SK-N-SH (cell line): ENCODE measurements at regions of chr7 and their contacts with region 1.

Region 1: GRCh38 chr7:30564243-30564892 is 30.3 kb upstream of the GARS1 start:
- DNase-seq: peak; percentile 85
- H3K4me3 ChIP-seq: no peak overlapping the region
- H3K27ac ChIP-seq: no peak overlapping the region; a peak in 1 of 4 replicates
- H3K4me1 ChIP-seq: peaks cover 0 to 9% of the 10 kb centered on the region in 2 experiments; a peak in 1 of 4 replicates
- H3K27me3 ChIP-seq: no peaks in the 10 kb centered on the region
- CTCF ChIP-seq: peak; percentile 96
- EP300 ChIP-seq: no peak
- RAD21 ChIP-seq: peak; percentile 99

Region 2: DNA sequence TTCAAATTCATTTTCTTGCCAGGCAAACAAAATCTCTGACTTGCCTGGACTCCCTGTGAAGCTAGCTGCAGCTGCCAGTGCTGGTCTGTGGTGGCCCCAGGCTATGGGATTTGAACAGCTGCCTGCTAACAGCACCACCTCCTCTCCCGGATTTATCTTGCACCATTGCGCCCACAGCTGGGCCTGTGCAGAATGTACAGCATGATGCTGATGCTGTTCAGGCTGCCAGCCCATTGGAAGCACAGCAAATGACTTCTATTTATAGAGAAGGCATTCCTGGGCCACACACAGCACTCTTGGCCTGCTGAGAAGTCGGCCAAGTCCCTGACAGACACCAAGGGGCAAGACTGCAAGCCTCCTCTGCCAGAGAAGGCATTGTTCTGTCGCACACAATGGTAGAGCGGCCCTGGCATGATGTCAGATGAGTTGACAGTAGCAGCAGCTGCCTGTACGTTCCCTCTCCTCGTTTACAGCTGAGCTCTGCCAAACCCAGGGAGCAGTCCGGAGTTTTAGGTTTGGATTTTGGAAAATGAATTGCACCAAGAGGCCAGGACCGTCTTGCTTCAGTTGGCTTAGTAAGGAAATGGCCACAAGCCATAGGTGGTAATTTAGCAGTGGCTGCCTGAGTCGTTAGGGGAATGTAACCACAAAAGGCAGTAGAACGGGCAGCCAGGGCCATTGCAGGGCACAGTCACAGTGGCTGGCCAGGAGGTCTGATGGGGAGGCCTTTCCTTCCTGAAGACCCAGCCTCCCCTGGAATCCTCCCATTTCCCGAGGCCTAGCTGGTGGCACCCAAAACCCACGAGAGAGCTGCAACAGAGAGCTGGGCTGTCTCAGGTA is 391.1 kb before region 1 on chr7:
- CTCF ChIA-PET with region 1: interaction called, 12 read pairs
- POLR2A ChIA-PET with region 1: no interaction called
- DNase-seq: peak; percentile 87
- H3K4me3 ChIP-seq: no peak overlapping the region; a peak in 1 of 4 replicates
- H3K27ac ChIP-seq: peak overlapping the region; percentile 40 to 95
- H3K4me1 ChIP-seq: peaks cover 34 to 38% of the 10 kb centered on the region in 2 experiments; a peak in 3 of 4 replicates
- H3K27me3 ChIP-seq: no peaks in the 10 kb centered on the region
- CTCF ChIP-seq: peak; percentile 40
- EP300 ChIP-seq: peak in 1 of 2 experiments; percentile 79; a peak in 2 of 4 replicates
- RAD21 ChIP-seq: peak; percentile 84

Region 3: GRCh38 chr7:30284298-30285066 is 279.9 kb before region 1 on chr7 and contains the start of gene ZNRF2:
- CTCF ChIA-PET with region 1: interaction called, 263 read pairs
- POLR2A ChIA-PET with region 1: no interaction called
- DNase-seq: peak; percentile 99
- H3K4me3 ChIP-seq: peak within 1 kb of the TSS; percentile 92 to 97
- H3K27ac ChIP-seq: peak within 1 kb of the TSS; percentile 83 to 94
- H3K4me1 ChIP-seq: peaks cover 5 to 7% of the 10 kb centered on the region in 2 experiments; a peak in 3 of 4 replicates
- H3K27me3 ChIP-seq: no peaks in the 10 kb centered on the region
- CTCF ChIP-seq: peak; percentile 48
- EP300 ChIP-seq: peak; percentile 5 to 45; a peak in 2 of 4 replicates
- RAD21 ChIP-seq: no peak
- polyA plus RNA-seq, gene ZNRF2: 3.8 and 4.0 TPM in 2 replicates

Region 4: GRCh38 chr7:30469303-30469702 is 95.1 kb before region 1 on chr7:
- CTCF ChIA-PET with region 1: interaction called, 17 read pairs
- POLR2A ChIA-PET with region 1: no interaction called
- DNase-seq: no peak
- H3K4me3 ChIP-seq: 0 out of 4 replicates have a peak overlapping the region, but pooled peaks of 1 of the 2 experiments have one; percentile 3
- H3K27ac ChIP-seq: peak overlapping the region; percentile 81 to 98
- H3K4me1 ChIP-seq: peaks cover 14 to 83% of the 10 kb centered on the region in 2 experiments
- H3K27me3 ChIP-seq: no peaks in the 10 kb centered on the region
- CTCF ChIP-seq: peak; percentile 61
- EP300 ChIP-seq: no peak; a peak in 1 of 4 replicates
- RAD21 ChIP-seq: peak; percentile 49

Region 5: DNA sequence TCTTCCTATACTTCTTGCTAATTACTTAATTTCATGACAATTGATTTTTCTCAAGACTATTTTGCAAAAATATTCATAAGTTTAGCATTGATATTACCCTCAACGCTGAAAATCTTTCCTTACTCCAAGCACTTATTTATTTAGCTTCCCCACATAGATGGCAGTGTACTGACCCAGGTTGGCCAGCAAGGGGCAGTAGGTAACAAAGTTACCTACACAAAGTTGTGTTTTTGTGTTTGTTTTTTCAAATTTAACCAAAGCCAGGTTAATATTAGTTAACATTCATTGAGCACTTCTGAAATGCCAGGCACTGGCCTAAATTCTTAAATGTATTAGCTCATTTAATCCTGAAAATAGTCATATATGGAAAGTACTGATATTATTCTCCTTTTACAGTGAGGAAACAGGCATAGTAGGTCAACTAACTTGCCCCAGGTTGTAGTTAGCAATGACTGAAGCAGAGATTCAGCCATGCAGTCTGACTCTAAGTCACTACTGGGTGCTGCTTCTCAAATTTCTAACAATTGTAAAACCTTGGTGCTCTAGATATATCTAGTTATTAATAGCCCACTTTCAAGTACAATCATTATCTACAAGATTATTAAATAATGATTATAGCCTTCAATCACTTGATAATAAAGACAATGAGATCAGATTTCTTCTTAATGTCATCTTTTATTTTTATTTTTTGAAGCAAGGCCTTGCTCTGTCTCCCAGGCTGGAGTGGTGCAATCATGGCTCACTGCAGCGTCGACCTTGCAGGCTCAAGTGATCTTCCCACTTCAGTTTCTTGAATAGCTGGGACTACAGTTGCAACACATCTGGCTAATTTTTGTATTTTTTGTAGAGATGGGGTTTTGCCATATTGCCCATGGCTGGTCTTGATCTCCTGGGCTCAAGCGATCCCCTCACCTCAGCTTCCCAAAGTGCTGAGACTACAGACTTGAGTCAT is 54.0 kb before region 1 on chr7:
- CTCF ChIA-PET with region 1: interaction called, 55 read pairs
- POLR2A ChIA-PET with region 1: no interaction called
- DNase-seq: peak; percentile 52
- H3K4me3 ChIP-seq: no peak overlapping the region
- H3K27ac ChIP-seq: 0 out of 4 replicates have a peak overlapping the region, but pooled peaks of 1 of the 2 experiments have one; percentile 67
- H3K4me1 ChIP-seq: peaks cover 0 to 10% of the 10 kb centered on the region in 2 experiments; a peak in 2 of 4 replicates
- H3K27me3 ChIP-seq: no peaks in the 10 kb centered on the region
- CTCF ChIP-seq: peak; percentile 96
- EP300 ChIP-seq: no peak
- RAD21 ChIP-seq: peak; percentile 72

Region 6: DNA sequence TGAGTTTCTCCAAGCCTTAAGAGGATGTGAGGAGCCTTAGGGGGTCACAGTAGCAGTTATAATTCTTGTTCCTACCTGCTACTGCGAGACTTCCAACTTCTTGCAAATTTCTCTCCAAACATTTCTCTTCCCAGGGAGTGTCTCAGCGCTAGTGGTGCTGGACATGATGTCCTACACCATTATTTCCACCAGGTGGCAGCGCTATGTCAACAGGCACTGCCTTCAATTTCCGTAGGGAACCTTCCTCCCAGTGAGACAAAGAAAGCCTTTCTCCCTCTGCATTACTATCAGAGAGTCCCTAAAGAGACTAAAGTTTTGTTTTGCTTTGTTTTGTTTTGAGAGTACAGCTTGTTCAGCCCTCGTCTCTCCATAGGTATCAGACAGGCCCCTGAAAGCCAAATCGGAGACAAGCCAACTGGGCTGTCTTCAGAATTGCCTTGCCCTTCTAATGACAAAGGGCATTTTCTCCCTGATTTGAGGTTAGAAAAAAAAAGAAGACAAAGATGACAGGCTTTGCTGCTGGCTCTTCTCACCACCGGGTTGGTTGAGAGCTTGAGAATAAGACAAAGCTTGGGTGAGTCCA is 15.5 kb before region 1 on chr7:
- CTCF ChIA-PET with region 1: interaction called, 294 read pairs
- POLR2A ChIA-PET with region 1: no interaction called
- DNase-seq: peak; percentile 77
- H3K4me3 ChIP-seq: peak overlapping the region in 1 of 2 experiments; percentile 1; a peak in 1 of 4 replicates
- H3K27ac ChIP-seq: peak overlapping the region in 1 of 2 experiments; percentile 35; a peak in 1 of 4 replicates
- H3K4me1 ChIP-seq: peaks cover 5 to 18% of the 10 kb centered on the region in 2 experiments; a peak in 3 of 4 replicates
- H3K27me3 ChIP-seq: no peaks in the 10 kb centered on the region
- CTCF ChIP-seq: peak; percentile 96
- EP300 ChIP-seq: no peak
- RAD21 ChIP-seq: peak; percentile 79